AG04450 (cell line): ENCODE measurements at regions of chr16 and their contacts with region 1.

Region 1: GRCh38 chr16:88680554-88681083 is 5.7 kb downstream of the SNAI3 start:
- DNase-seq: no peak
- H3K4me3 ChIP-seq: no peak overlapping the region
- H3K27ac ChIP-seq: no peak overlapping the region
- H3K27me3 ChIP-seq: peaks cover 6% of the 10 kb centered on the region
- CTCF ChIP-seq: no peak

Region 2: DNA sequence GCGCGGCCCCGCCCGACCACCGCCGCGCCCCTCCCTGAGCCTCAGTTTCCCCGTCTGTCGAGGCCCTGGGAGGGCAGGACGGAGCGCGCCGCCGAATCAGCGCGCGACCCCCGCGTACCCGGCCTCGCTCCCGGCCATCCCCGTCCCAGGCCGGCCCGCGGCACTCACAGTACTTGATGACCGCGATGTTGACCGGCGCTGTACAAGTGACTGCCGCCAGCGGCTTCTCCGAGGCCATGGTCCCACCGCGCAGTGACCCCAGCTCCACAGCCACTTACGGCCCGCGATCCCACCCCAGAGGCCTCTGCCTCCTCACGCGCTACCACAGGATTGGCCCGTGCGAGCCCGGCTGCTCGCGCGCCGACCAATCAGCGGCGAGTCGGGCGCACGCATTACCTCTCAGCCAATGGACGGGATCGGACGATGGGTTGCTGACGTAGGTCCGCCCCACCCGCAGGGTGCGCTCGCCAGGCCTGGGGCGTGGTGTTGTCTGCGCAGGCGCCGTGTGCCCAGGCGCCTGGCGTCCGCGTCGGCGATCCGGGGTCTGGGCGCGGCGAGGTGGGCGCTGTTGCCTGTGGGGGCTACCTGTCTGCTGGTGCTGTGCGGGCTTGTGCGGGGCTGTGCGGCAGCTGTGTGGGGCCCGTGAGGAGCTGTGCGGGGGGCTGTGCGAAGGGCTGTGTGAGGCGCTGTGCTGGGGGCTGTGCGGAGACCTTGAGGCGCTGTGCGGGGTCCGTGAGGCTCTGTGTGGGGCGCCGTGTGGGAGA is 17.6 kb before region 1 on chr16 and contains the start of gene MVD:
- CTCF ChIA-PET with region 1: interaction called, 3 read pairs
- POLR2A ChIA-PET with region 1: interaction called, 10 read pairs
- DNase-seq: peak; percentile 95
- H3K4me3 ChIP-seq: peak within 1 kb of the TSS; percentile 97
- H3K27ac ChIP-seq: no peak within 1 kb of the TSS
- H3K27me3 ChIP-seq: no peaks in the 10 kb centered on the region
- CTCF ChIP-seq: 0 out of 2 replicates have a peak, but pooled peaks have one; percentile 8
- polyA plus RNA-seq, gene MVD: 9.1 and 13.5 TPM in 2 replicates